HCT116 (cell line): ENCODE measurements at regions of chr17 and their contacts with region 1.

Region 1: GRCh38 chr17:45172454-45173286 is 11.0 kb downstream of the HEXIM2 start:
- DNase-seq: peak; percentile 87
- ATAC-seq: peak; percentile 78
- H3K4me3 ChIP-seq: peak overlapping the region; percentile 28 to 60
- H3K27ac ChIP-seq: peak overlapping the region; percentile 99
- H3K4me1 ChIP-seq: peaks cover 68 to 70% of the 10 kb centered on the region in 2 experiments
- H3K27me3 ChIP-seq: no peaks in the 10 kb centered on the region
- CTCF ChIP-seq: peak in 2 of 3 experiments; percentile 13 to 18; a peak in 1 of 6 replicates
- POLR2A ChIP-seq: peak; percentile 54
- RAD21 ChIP-seq: no peak

Region 2: DNA sequence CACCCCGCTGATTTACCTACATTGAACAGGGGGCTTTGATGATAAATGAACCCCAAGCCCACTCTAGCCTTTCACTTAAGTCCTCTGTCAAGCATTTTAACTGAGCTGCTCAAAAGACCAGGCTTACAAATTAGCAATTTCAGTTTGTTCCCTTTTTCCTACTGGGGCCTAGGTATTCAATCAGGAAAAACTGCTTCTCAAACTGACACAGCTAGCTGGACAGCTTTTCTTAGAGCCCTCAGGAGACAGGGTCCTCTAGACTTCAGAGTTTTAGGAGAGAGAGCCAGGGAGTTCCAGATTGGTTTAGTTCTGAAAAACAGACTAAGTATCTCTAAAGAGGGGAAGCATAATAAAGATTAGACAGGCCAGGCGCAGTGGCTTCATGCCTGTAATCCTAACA is 17.2 kb before region 1 on chr17:
- CTCF ChIA-PET with region 1: interaction called, 29 read pairs
- POLR2A ChIA-PET with region 1: interaction called, 176 read pairs
- RAD21 ChIA-PET with region 1: interaction called in 1 of 2 experiments, 4 read pairs
- intact Hi-C with region 1: no loop called
- DNase-seq: no peak
- ATAC-seq: no peak
- H3K4me3 ChIP-seq: no peak overlapping the region
- H3K27ac ChIP-seq: no peak overlapping the region
- H3K4me1 ChIP-seq: peaks cover 32 to 40% of the 10 kb centered on the region in 2 experiments
- H3K27me3 ChIP-seq: no peaks in the 10 kb centered on the region
- CTCF ChIP-seq: no peak
- POLR2A ChIP-seq: no peak
- RAD21 ChIP-seq: no peak

Region 3: DNA sequence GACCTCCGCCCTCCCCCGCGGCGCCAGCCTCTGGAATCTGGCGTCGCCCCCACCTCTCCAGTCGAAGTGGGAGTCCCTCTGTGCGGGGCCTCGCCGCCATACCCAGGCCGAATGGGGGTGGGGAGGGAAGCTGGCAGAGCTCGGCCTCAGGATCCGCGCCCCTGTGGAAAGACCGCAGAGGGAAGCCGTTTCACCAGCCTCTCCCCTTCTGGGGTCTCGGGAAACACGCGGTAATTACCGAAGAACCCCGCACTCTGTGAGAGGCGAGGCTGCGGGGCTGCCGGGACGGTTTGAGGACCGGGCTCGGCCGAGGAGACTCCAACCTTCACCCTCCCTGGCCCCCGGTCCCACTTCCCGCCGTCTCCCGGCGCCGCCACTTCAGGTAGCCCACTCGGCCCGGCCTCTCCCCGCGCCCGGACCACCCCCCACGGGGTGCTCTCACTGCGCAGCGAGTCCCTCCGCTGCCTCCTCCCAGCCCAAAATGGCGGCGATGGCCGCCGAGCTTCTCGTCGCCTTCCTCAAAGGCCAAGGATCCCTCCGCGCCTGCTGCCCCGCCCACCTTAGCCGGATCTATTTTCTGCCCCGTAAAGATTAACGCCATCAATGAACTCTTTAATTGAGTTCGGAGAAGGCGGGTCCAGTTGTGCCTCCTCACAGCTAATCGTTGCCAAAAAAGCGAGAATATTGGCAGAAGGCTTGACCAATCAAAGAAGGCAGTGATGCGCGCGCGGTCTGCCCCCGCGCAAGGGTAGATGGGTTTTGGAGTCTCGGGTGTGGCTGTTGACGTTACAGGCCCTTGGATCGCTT is 11.4 kb before region 1 on chr17:
- CTCF ChIA-PET with region 1: interaction called, 9 read pairs
- POLR2A ChIA-PET with region 1: interaction called, 86 read pairs
- RAD21 ChIA-PET with region 1: interaction called, 5 read pairs
- intact Hi-C with region 1: loop called (anchors 1 kb)
- DNase-seq: peak; percentile 100
- ATAC-seq: peak; percentile 93
- H3K4me3 ChIP-seq: peak overlapping the region; percentile 89 to 97
- H3K27ac ChIP-seq: peak overlapping the region; percentile 89
- H3K4me1 ChIP-seq: peaks cover 23 to 35% of the 10 kb centered on the region in 2 experiments
- H3K27me3 ChIP-seq: no peaks in the 10 kb centered on the region
- CTCF ChIP-seq: 0 out of 6 replicates have a peak, but pooled peaks of 1 of the 3 experiments have one; percentile 9
- POLR2A ChIP-seq: peak; percentile 52
- RAD21 ChIP-seq: 0 out of 2 replicates have a peak, but pooled peaks have one; percentile 15

Region 4: GRCh38 chr17:45197555-45198334 is 25.1 kb after region 1 on chr17:
- CTCF ChIA-PET with region 1: interaction called, 36 read pairs
- POLR2A ChIA-PET with region 1: interaction called, 6 read pairs
- RAD21 ChIA-PET with region 1: interaction called in 1 of 2 experiments, 7 read pairs
- intact Hi-C with region 1: no loop called
- DNase-seq: peak; percentile 81
- ATAC-seq: peak; percentile 96
- H3K4me3 ChIP-seq: no peak overlapping the region
- H3K27ac ChIP-seq: peak overlapping the region; percentile 53
- H3K4me1 ChIP-seq: peaks cover 12 to 31% of the 10 kb centered on the region in 2 experiments; a peak in 3 of 4 replicates
- H3K27me3 ChIP-seq: no peaks in the 10 kb centered on the region
- CTCF ChIP-seq: peak; percentile 98 to 99 (median 99)
- POLR2A ChIP-seq: no peak
- RAD21 ChIP-seq: peak; percentile 100